Mammary epithelial cell (primary cell): ENCODE measurements at regions of chr14 and their contacts with region 1.

Region 1: GRCh38 chr14:24241829-24242443 is 487 bp downstream of the TINF2 start:
- DNase-seq: peak; percentile 93
- H3K4me3 ChIP-seq: peak overlapping the region; percentile 54 to 71 (median 63)
- H3K27ac ChIP-seq: peak overlapping the region; percentile 97
- H3K4me1 ChIP-seq: peaks cover 44% of the 10 kb centered on the region
- H3K27me3 ChIP-seq: no peaks in the 10 kb centered on the region
- CTCF ChIP-seq: peak in 1 of 2 donors; percentile 51

Region 2: DNA sequence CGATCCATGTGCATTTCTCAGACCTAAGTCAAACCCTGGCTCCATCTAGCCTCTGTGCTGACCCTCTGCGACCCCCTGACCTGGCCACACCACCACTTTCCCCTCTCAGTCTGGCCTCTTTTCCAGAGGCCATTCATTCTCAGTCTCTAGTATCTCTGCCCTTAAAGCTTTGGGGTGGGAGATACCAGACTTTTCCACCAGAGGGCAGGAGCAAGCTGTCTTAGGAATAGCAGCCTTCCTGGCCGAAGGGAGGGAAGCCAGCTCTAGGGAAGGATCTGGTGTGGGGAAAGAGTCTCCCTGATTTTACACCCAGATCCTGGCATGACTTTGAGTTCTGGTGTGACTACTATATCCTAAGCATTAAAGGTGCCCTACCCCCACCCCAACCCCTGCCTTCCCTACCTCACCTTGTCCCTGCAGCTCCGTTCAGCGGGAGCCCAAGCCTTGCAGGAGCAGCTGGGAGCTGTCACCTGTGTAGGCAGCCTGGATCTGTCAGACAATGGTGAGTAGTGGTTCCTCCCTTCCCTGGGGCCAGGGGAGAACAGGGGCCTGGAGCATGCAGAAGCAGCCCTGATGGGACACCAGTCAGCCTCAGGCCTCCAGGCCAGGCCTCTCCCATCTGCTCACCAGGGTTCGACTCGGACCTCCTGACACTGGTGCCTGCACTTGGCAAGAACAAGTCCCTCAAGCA is 183.5 kb before region 1 on chr14:
- CTCF ChIA-PET with region 1: interaction called, 11 read pairs
- dilution Hi-C with region 1: no loop called
- in situ Hi-C with region 1: no loop called
- intact Hi-C with region 1: no loop called
- DNase-seq: peak; percentile 50
- H3K4me3 ChIP-seq: no peak overlapping the region
- H3K27ac ChIP-seq: no peak overlapping the region
- H3K4me1 ChIP-seq: no peaks in the 10 kb centered on the region
- H3K27me3 ChIP-seq: peaks cover 7% of the 10 kb centered on the region
- CTCF ChIP-seq: peak; percentile 57 to 62

Region 3: GRCh38 chr14:24215495-24216344 is 26.2 kb before region 1 on chr14 and contains the start of gene MDP1:
- CTCF ChIA-PET with region 1: interaction called, 3 read pairs
- dilution Hi-C with region 1: no loop called
- in situ Hi-C with region 1: no loop called
- intact Hi-C with region 1: loop called (anchors 1 kb)
- DNase-seq: peak; percentile 83
- H3K4me3 ChIP-seq: peak within 1 kb of the TSS; percentile 34 to 86 (median 46)
- H3K27ac ChIP-seq: peak within 1 kb of the TSS; percentile 42
- H3K4me1 ChIP-seq: peaks cover 14% of the 10 kb centered on the region
- H3K27me3 ChIP-seq: no peaks in the 10 kb centered on the region
- CTCF ChIP-seq: peak; percentile 39 to 60
- total RNA-seq, gene MDP1: 6.5 to 12.0 TPM

Region 4: GRCh38 chr14:24271134-24271833 is 29.3 kb after region 1 on chr14 and contains the start of gene RABGGTA:
- CTCF ChIA-PET with region 1: interaction called, 3 read pairs
- dilution Hi-C with region 1: no loop called
- in situ Hi-C with region 1: no loop called
- intact Hi-C with region 1: loop called (anchors 1 kb)
- DNase-seq: peak; percentile 88
- H3K4me3 ChIP-seq: peak within 1 kb of the TSS; percentile 64 to 90 (median 70)
- H3K27ac ChIP-seq: peak within 1 kb of the TSS; percentile 84
- H3K4me1 ChIP-seq: peaks cover 29% of the 10 kb centered on the region
- H3K27me3 ChIP-seq: no peaks in the 10 kb centered on the region
- CTCF ChIP-seq: peak; percentile 55 to 81
- total RNA-seq, gene RABGGTA: 51.3 to 74.5 TPM

Region 5: GRCh38 chr14:24431569-24432258 is 189.8 kb after region 1 on chr14:
- CTCF ChIA-PET with region 1: interaction called, 4 read pairs
- dilution Hi-C with region 1: no loop called
- in situ Hi-C with region 1: no loop called
- intact Hi-C with region 1: loop called (anchors 2 kb)
- DNase-seq: peak; percentile 84
- H3K4me3 ChIP-seq: peak overlapping the region in 2 of 3 experiments; percentile 64 to 75
- H3K27ac ChIP-seq: peak overlapping the region; percentile 73
- H3K4me1 ChIP-seq: peaks cover 35% of the 10 kb centered on the region
- H3K27me3 ChIP-seq: no peaks in the 10 kb centered on the region
- CTCF ChIP-seq: peak; percentile 98